ENCODE measurements at regions of chr1 and their contacts with region 1.

Region 1: DNA sequence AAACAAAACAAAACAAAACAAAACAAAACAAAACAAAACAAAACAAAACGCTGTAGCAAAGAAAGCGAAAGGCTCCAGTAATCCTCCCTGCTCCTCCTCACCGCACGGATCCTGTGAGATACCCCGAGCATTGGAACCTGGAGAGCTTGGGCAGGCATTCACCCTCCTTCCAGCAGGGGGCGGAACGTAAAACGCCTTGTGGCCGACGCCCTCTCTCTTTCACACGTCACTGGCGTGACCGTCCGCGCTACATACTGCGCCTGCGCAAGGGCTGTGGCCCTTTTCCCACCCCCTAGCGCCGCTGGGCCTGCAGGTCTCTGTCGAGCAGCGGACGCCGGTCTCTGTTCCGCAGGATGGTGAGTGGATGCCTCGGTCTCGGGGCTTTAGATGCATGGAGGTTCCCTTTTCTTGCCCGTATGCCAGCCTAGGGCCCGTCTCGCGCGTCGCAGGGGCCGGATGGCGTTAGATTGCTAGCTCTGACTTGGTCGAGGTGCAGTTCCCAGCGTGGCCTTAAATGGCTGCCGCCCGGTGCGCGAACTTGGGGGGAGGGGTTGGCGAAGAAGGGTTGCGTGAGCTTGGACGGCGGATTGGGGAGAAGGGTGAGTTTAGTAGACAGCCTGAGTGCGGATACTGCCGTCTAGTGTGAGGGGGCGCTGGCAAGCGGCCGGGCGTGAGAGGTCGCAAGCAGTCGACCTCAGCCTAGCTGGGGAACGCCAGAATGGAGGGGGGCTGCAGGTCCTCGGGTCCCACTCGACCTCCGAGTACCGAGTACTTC is at the start of gene RPL5:
- DNase-seq: peak; percentile 89 to 96
- ATAC-seq: peak; percentile 97 to 98
- H3K4me3 ChIP-seq: peak within 1 kb of the TSS; percentile 90 to 95 (median 92)
- H3K27ac ChIP-seq: peak within 1 kb of the TSS; percentile 93 to 97 (median 95)
- H3K4me1 ChIP-seq: peaks cover 21% of the 10 kb centered on the region in 2 donors
- H3K27me3 ChIP-seq: no peaks in the 10 kb centered on the region
- CTCF ChIP-seq: peak; percentile 82 to 97 (median 93)
- POLR2A ChIP-seq: peak; percentile 92
- total RNA-seq, gene RPL5: 851 to 985 (median 913) TPM

Region 2: GRCh38 chr1:92749024-92749634 is 82.8 kb before region 1 on chr1:
- in situ Hi-C with region 1: no loop called
- intact Hi-C with region 1: no loop called
- DNase-seq: no peak
- ATAC-seq: peak in 1 of 2 donors; percentile 83
- H3K4me3 ChIP-seq: no peak overlapping the region
- H3K27ac ChIP-seq: no peak overlapping the region
- H3K4me1 ChIP-seq: peaks cover 3 to 11% of the 10 kb centered on the region in 2 donors
- H3K27me3 ChIP-seq: no peaks in the 10 kb centered on the region
- CTCF ChIP-seq: peak; percentile 12 to 60 (median 38)
- POLR2A ChIP-seq: no peak

Region 3: DNA sequence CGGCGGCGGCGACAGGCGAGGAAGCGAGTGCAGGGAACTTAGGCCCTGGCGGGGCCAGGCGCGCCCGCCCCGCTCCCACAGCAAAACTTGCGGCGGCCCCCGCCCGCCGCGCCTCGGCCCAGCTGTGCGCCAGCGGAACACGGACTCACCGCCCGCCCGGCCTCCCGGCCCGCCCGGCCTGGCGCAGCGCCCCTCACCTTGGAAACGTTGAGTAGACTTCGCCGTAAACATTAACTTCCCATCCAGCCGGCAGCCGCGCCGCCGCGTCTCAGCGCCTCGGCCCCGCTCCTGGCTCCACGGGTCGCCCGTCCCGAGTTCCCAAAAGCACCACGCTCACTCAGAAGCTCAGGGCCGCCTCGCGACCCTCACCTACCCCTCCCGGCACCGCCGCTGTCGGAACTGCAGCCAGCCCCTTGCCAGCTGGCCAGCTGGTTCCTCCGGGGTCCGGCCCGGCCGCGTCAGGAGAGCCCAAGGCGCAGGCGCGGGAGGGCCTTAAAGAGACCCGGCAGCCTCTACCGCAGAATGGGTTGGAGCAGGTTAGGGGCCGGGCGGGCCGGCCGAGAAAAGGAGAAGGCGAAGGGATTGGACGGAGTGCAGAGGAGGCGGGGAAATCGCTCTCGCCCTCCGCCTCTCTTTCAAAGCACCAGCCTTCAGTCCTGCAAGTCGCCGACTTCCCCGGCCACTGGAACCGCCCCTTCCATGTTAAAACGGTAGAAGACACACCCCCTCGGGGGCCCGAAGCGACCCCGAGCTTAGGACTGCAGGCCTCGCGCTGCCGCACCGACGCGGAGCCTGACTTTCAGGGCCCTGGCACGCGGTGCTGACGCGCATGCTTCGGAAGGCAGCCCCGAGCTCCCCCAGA is 47.1 kb before region 1 on chr1 and contains the start of gene EVI5:
- in situ Hi-C with region 1: no loop called
- intact Hi-C with region 1: loop called (anchors 1 kb)
- DNase-seq: peak; percentile 91 to 93
- ATAC-seq: peak; percentile 94
- H3K4me3 ChIP-seq: peak within 1 kb of the TSS; percentile 82 to 98 (median 88)
- H3K27ac ChIP-seq: peak within 1 kb of the TSS; percentile 92 to 98 (median 94)
- H3K4me1 ChIP-seq: peaks cover 14 to 22% of the 10 kb centered on the region in 2 donors
- H3K27me3 ChIP-seq: no peaks in the 10 kb centered on the region
- CTCF ChIP-seq: peak in 2 of 5 experiments; percentile 30 to 41
- POLR2A ChIP-seq: peak; percentile 61 to 80
- total RNA-seq, gene EVI5: 4.6 to 12.5 (median 8.2) TPM

Region 4: DNA sequence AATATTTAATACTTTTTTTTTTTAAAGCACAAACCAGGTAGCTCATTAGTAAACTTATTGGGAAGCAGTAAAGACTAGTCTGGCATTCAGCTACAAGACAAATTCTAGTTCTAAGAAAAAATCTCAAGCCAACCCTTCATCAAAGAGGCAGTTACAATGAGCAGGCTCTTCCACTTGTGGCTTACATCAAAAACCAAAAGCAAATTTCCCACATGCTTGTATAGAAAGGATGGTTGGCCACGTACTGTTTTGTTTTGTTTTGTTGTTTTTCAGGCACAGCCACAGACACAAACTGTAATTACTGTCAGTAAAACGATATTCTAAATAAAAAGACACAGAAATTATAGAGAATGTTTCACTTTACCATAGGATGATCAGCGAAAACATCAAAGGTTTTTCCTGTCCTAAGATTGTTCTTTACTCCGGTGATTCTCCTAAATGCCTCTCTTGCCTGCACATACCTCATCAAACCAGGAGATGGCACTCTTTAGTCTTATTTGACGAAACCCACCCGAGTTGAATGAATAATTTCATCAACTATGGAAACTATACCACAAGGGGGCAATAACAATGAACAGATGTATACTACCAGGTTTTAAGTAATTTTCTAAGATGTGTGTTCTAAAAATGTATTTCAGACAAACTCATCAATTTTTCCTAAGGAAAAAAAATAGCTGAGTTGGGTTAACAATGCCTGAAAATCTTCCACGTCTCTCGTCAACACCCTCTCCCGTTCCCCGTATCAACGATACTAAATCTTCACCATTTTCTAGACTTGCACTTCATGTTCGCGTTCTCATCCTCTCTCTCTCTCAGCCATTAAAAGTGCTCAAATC is 26.8 kb after region 1 on chr1:
- in situ Hi-C with region 1: no loop called
- intact Hi-C with region 1: no loop called
- DNase-seq: peak; percentile 18 to 27
- ATAC-seq: peak; percentile 87 to 92
- H3K4me3 ChIP-seq: peak overlapping the region; percentile 26 to 46 (median 40)
- H3K27ac ChIP-seq: peak overlapping the region; percentile 53 to 66 (median 60)
- H3K4me1 ChIP-seq: peaks cover 11 to 13% of the 10 kb centered on the region in 2 donors
- H3K27me3 ChIP-seq: no peaks in the 10 kb centered on the region
- CTCF ChIP-seq: peak; percentile 89 to 98 (median 90)
- POLR2A ChIP-seq: no peak